Dorsolateral prefrontal cortex (tissue), 120 donors: ENCODE measurements at regions of chr20 and their contacts with region 1.

Region 1: GRCh38 chr20:35994994-35995453 is 26.6 kb downstream of the CNBD2 start:
- DNase-seq: peak; percentile 68 to 83 (median 76)
- H3K4me3 ChIP-seq: no peak overlapping the region
- H3K27ac ChIP-seq: peak overlapping the region in 1 of 59 donors; percentile 36
- H3K27me3 ChIP-seq: no peaks in the 10 kb centered on the region
- CTCF ChIP-seq: peak; percentile 43 to 92 (median 83)

Region 2: DNA sequence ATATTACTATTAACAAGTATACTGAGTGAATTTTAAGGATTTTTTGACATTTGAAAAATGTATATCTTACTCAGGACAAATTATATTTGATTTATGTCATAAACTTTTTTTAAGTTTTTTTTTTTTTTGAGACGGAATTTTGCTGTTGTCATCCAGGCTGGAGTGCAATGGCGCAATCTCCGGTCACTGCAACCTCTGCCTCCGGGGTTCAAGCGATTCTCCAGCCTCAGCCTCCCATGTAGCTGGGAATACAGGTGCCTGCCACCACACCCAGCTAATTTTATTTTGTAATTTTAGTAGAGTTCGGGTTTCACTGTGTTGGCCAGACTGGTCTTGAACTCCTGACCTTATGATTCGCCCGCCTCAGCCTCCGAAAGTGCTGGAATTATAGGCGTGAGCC is 178.7 kb before region 1 on chr20:
- intact Hi-C with region 1: no loop called
- DNase-seq: no peak
- H3K4me3 ChIP-seq: no peak overlapping the region
- H3K27ac ChIP-seq: no peak overlapping the region
- H3K27me3 ChIP-seq: no peaks in the 10 kb centered on the region
- CTCF ChIP-seq: no peak

Region 3: GRCh38 chr20:36043892-36044515 is 49.0 kb after region 1 on chr20:
- intact Hi-C with region 1: loop called in 1 of 2 experiments (anchors 5 kb)
- DNase-seq: no peak
- H3K4me3 ChIP-seq: no peak overlapping the region
- H3K27ac ChIP-seq: peak overlapping the region in 1 of 59 donors; percentile 17
- H3K27me3 ChIP-seq: no peaks in the 10 kb centered on the region
- CTCF ChIP-seq: no peak

Region 4: GRCh38 chr20:36135159-36135558 is 140.1 kb after region 1 on chr20:
- intact Hi-C with region 1: loop called (anchors 1 to 5 kb)
- DNase-seq: no peak
- H3K4me3 ChIP-seq: no peak overlapping the region
- H3K27ac ChIP-seq: no peak overlapping the region
- H3K27me3 ChIP-seq: no peaks in the 10 kb centered on the region
- CTCF ChIP-seq: no peak